ENCODE measurements at regions of chr10 and their contacts with region 1.

Region 1: DNA sequence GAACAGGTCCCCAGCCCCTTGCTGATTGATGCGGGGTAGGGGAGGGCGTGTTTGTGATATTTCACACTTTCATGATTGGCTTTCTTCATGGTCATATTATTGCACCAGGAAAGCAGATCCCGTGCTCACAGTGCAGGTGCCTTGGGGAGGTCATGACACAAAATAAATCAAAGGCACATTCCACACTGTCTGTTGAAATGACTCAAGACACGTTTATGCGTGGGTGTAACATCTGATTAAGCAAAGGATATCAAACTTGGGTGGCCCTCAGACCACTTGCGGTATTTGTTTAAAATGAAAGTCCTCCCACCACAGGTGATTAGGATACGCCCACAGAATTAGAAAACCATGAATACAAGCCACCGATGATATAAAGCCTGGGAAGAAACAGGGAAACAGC is 51.1 kb downstream of the SVIL start:
- DNase-seq: no peak
- ATAC-seq: no peak
- H3K4me3 ChIP-seq: no peak overlapping the region
- H3K27ac ChIP-seq: peak overlapping the region; percentile 90
- H3K4me1 ChIP-seq: peaks cover 63% of the 10 kb centered on the region
- H3K27me3 ChIP-seq: no peaks in the 10 kb centered on the region
- CTCF ChIP-seq: no peak

Region 2: DNA sequence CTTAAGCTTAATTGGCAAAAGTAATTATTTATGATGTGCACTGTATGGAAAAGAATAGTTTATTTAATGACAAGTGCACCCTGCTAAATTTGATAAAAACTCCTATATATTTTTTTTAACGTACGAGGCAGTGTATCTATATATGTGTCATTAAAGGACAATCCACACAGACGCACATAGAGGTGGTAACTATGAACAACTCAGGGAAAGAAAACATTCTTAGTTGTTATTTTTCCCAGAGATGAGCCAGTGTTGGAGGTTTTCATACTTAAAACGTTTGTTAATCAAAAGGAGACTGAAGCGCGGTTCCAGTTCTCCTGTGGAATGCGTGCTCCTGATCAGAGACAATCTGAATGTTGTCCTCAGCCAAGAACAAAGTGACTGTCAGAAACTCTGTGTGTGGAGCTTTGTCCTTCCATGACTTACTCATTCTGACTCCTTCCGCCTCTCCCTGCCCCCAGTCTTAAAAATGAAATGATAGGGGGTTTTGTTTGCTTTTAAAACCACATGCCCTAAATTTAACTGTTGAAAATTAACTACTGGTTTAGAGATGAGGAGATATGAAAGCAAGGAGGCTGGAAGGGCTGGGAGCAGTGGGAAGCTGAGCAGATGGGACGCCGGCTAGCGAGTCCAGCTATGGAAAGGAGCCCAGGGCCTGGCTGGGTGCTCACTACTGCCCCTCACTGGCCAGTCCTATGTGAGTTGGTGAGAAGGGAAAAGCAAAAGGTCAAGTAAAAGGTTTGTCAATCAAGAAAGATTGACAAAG is 48.5 kb before region 1 on chr10:
- intact Hi-C with region 1: loop called in 1 of 2 experiments (anchors 5 kb)
- DNase-seq: peak in 1 of 2 donors; percentile 60
- ATAC-seq: peak; percentile 24 to 68 (median 58)
- H3K4me3 ChIP-seq: peak overlapping the region; percentile 16
- H3K27ac ChIP-seq: peak overlapping the region; percentile 76
- H3K4me1 ChIP-seq: peaks cover 84% of the 10 kb centered on the region
- H3K27me3 ChIP-seq: no peaks in the 10 kb centered on the region
- CTCF ChIP-seq: peak; percentile 57